ENCODE measurements at regions of chr1 and their contacts with region 1.

Region 1: GRCh38 chr1:1890506-1891348 is at the start of gene GNB1:
- DNase-seq: peak; percentile 86
- H3K4me3 ChIP-seq: peak within 1 kb of the TSS; percentile 80 to 96 (median 92)
- H3K27ac ChIP-seq: peak within 1 kb of the TSS; percentile 84
- H3K4me1 ChIP-seq: peaks cover 22% of the 10 kb centered on the region
- H3K27me3 ChIP-seq: no peaks in the 10 kb centered on the region
- CTCF ChIP-seq: no peak
- total RNA-seq, gene GNB1: 105 to 480 TPM

Region 2: GRCh38 chr1:1615256-1616044 is 275.3 kb before region 1 on chr1 and contains the start of gene MIB2:
- CTCF ChIA-PET with region 1: no interaction called
- dilution Hi-C with region 1: loop called (anchors 10 kb)
- in situ Hi-C with region 1: no loop called
- intact Hi-C with region 1: no loop called
- DNase-seq: peak; percentile 92
- H3K4me3 ChIP-seq: peak within 1 kb of the TSS; percentile 91 to 99 (median 93)
- H3K27ac ChIP-seq: peak within 1 kb of the TSS; percentile 89
- H3K4me1 ChIP-seq: peaks cover 17% of the 10 kb centered on the region
- H3K27me3 ChIP-seq: no peaks in the 10 kb centered on the region
- CTCF ChIP-seq: no peak
- total RNA-seq, gene MIB2: 44.8 to 48.5 TPM

Region 3: DNA sequence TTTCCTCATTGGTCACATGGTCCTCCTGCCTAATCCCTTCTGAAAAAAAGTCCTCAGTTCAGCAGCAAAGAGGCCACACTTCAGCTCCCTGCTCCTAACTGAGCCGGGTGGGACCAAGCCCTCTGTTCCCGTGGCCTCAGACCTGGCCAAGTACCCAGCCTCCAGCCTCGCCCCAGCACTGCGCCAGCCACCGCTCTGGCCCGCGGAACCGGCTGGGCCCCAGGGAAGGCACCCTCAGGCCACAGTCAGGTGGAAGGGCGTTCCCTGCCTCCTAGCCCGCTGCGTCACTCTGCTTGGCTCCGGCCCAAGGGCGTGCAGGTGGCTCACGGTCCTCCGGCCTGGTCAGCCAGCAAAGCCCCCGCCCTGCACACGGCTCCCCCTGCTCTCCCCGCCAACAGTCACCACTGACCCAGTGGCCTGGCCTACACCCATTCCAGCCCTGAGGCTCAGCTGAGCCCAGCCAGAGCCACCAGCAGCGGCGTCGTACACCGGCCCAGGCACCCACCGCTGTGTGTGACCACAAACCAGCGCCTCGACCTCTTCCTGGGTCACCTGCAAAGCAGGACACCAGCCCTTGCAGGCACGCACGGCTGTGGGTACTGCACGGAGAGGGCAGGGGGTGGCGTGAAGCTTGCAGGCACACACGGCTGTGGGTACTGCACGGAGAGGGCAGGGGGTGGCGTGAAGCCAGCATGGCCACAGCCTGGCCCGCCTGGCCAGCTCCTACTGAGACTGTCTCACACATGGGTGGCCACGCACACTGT is 131.9 kb before region 1 on chr1:
- CTCF ChIA-PET with region 1: no interaction called
- dilution Hi-C with region 1: loop called (anchors 5 kb)
- in situ Hi-C with region 1: no loop called
- intact Hi-C with region 1: no loop called
- DNase-seq: peak; percentile 62
- H3K4me3 ChIP-seq: no peak overlapping the region
- H3K27ac ChIP-seq: no peak overlapping the region
- H3K4me1 ChIP-seq: peaks cover 15% of the 10 kb centered on the region
- H3K27me3 ChIP-seq: no peaks in the 10 kb centered on the region
- CTCF ChIP-seq: no peak

Region 4: DNA sequence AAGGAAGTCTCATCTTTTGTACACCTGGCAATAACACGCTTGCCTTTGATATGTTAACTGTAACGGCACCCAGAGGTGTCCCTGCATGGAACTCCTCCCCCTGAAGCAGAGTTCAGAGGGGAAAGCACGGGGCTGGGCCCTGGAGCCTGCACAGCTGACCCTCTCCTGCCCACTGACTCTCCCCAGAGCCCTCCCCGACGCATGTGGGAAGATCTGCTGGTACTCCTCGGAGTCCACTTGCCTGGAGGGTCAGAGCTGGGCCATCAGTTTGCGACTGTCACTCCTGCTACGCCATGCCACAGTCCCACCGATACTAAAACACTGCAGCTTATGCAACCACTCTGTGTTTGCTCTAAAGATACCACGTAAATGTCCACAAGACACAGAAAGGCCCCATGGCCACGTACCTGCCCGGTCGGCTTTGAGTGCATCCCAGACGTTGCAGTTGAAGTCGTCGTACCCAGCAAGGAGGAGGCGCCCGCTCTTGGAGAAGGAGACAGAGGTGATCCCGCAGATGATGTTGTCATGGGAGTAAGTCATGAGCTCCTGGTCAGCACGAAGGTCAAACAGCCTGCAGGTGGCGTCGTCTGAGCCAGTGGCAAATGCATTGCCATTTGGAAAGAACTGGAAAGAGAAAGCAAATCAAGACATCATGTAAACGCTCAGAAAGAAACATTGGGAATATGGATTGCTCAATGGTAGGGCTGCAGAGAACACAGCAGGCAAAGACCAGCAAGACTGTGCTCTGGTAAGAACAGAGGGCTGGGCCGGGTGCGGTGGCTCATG is 101.9 kb before region 1 on chr1:
- CTCF ChIA-PET with region 1: interaction called, 23 read pairs
- dilution Hi-C with region 1: no loop called
- in situ Hi-C with region 1: no loop called
- intact Hi-C with region 1: no loop called
- DNase-seq: no peak
- H3K4me3 ChIP-seq: no peak overlapping the region
- H3K27ac ChIP-seq: no peak overlapping the region
- H3K4me1 ChIP-seq: peaks cover 5% of the 10 kb centered on the region
- H3K27me3 ChIP-seq: no peaks in the 10 kb centered on the region
- CTCF ChIP-seq: peak; percentile 19 to 41

Region 5: DNA sequence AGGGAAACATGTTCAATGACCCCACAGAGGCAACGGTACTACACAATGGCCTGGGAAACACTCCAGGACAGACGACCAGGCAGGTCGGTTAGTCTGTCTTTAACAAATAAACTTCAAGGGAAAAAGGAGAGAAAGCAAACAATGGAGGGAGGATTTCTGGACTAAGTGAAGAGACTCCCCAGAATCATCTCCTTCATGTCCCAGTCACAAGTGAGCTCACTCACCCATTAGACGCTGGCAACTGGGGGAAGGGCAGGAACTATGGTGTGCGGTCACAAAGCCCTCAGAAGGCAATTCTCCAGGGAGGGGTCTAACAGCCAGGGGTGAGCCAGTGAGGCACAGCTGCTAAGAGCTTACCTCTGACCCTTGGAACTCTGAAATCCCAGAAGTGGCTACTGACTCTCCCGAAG is 56.8 kb before region 1 on chr1:
- CTCF ChIA-PET with region 1: no interaction called
- dilution Hi-C with region 1: no loop called
- in situ Hi-C with region 1: no loop called
- intact Hi-C with region 1: loop called (anchors 2 kb)
- DNase-seq: no peak
- H3K4me3 ChIP-seq: no peak overlapping the region
- H3K27ac ChIP-seq: no peak overlapping the region
- H3K4me1 ChIP-seq: peaks cover 18% of the 10 kb centered on the region
- H3K27me3 ChIP-seq: no peaks in the 10 kb centered on the region
- CTCF ChIP-seq: no peak

Region 6: GRCh38 chr1:1906185-1907097 is 15.7 kb after region 1 on chr1:
- CTCF ChIA-PET with region 1: interaction called, 6 read pairs
- dilution Hi-C with region 1: no loop called
- in situ Hi-C with region 1: no loop called
- intact Hi-C with region 1: loop called (anchors 1 kb)
- DNase-seq: peak; percentile 57
- H3K4me3 ChIP-seq: no peak overlapping the region
- H3K27ac ChIP-seq: no peak overlapping the region
- H3K4me1 ChIP-seq: peaks cover 27% of the 10 kb centered on the region
- H3K27me3 ChIP-seq: no peaks in the 10 kb centered on the region
- CTCF ChIP-seq: peak; percentile 95 to 97

Region 7: DNA sequence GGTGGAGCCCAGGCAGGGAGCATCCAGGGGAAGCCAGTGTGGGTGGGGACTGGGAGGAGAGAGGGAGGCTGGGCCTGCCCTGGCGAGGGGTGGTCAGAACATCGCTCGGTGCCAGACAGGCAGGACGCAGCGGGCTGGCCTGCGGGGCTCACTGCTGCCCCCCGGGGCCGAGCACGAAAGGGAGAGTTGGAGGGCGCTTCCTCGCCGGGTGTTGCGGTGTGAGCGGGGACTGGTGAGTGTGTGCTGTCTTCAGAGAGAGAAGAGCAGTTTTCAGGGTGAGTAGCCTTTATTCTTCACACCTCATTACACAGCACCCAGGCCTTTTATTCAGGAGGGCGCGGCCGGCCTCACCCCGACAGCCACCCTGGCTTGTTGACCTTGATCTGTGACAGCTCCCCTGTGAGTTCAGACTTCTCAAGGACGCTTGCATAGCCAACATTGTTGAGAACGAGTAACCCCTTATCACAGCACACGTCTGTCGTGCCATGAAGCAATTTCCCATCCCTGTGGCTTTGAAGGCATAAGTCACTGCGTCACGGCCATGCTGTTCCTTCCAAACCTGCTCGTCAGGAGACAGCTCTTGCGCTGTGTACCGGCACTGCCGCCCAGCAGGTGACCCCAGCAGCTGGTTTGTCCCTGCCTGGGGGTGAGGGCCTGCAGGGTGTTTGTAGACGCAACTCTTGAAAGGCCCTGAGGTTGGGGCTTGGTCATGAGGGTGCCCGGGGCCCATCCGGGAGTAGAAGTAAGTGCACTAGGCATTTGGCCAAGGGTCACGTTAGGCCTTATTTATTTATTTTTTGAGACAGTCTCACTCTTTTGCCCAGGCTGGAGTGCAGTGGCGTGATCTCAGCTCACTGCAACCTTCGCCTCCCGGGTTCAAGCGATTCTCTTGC is 214.1 kb after region 1 on chr1:
- CTCF ChIA-PET with region 1: no interaction called
- dilution Hi-C with region 1: no loop called
- in situ Hi-C with region 1: no loop called
- intact Hi-C with region 1: no loop called
- DNase-seq: no peak
- H3K4me3 ChIP-seq: no peak overlapping the region
- H3K27ac ChIP-seq: no peak overlapping the region
- H3K4me1 ChIP-seq: no peaks in the 10 kb centered on the region
- H3K27me3 ChIP-seq: no peaks in the 10 kb centered on the region
- CTCF ChIP-seq: no peak

Measured in mammary epithelial cell (primary cell).